ENCODE measurements at regions of chr12 and their contacts with region 1.

Region 1: DNA sequence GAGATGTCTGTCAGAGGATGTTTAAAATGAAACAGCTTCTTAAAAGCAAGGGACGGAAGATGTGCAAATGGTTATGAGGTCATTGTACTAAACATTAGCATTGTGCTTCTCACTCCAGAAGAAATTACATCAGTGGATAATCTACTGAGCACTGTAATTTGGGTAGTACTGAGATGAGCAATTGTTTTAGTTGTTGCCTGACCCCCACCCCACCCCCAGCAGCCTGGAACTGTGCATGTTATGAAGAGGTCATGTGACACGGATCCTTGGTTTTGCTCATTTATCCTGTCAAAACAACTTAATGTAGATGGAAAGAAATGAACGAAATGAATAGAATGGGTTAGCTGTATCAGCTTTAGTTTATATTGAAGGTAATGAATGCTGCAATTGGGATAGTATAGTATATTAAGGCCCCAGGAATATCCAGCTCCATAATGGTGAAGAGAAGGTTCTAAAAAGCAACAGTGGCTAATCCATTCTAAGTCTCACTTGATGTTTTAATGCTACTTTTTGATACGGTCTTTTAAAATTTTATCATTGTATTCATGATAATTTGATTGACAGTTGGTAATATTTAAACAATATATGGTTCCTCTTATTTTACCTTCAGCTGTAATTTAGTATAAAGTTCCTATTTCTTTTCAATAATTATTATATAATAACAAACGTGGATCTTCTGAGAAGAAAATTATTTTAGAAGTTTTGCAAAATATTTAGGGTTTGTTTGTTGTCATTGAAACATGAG is 58.5 kb downstream of the WNK1 start:
- DNase-seq: no peak
- H3K4me3 ChIP-seq: no peak overlapping the region
- H3K27ac ChIP-seq: no peak overlapping the region
- H3K4me1 ChIP-seq: no peaks in the 10 kb centered on the region
- H3K27me3 ChIP-seq: no peaks in the 10 kb centered on the region
- CTCF ChIP-seq: no peak

Region 2: DNA sequence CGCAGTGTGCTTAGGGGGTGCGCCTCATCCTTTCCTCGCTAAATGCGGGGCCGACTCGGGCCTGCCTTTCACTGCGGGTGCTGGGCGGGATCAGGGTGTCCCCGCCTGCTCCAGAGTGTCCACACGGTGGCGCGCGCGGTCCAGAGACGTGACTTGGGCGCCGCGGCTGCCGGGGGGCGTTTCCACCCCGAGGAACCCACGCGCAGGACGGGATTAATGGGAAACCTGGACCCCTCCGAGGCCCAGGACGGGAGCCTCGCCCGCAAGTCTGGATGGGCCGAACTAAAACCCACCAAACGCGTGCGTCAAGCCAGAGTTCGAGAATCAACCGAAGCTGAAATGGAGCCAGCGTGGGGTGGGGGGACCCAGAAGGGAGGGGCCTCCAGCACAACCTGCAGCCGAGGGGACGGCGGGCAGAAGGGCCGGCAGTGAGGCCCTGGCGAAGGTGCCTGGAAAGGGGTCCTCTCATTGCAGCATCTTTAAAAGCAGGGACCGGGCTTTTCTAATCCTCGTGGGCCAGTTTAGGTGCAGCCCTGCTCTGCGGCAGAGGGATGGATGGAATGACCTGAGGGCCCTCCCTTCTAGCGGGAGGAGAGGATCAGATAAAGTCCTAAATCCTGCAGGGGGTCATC is 240.9 kb before region 1 on chr12:
- CTCF ChIA-PET with region 1: interaction called, 14 read pairs
- POLR2A ChIA-PET with region 1: no interaction called
- intact Hi-C with region 1: loop called (anchors 1 kb)
- DNase-seq: peak; percentile 61 to 90
- H3K4me3 ChIP-seq: peak overlapping the region; percentile 77
- H3K27ac ChIP-seq: peak overlapping the region; percentile 84; the same call in 1 of the 2 replicates
- H3K4me1 ChIP-seq: peaks cover 25% of the 10 kb centered on the region
- H3K27me3 ChIP-seq: no peaks in the 10 kb centered on the region
- CTCF ChIP-seq: peak; percentile 94

Region 3: GRCh38 chr12:575948-576612 is 234.8 kb before region 1 on chr12:
- CTCF ChIA-PET with region 1: interaction called, 14 read pairs
- POLR2A ChIA-PET with region 1: no interaction called
- intact Hi-C with region 1: loop called (anchors 1 kb)
- DNase-seq: peak; percentile 48 to 84
- H3K4me3 ChIP-seq: peak overlapping the region; percentile 33; the same call in 1 of the 2 replicates
- H3K27ac ChIP-seq: no peak overlapping the region
- H3K4me1 ChIP-seq: peaks cover 22% of the 10 kb centered on the region
- H3K27me3 ChIP-seq: no peaks in the 10 kb centered on the region
- CTCF ChIP-seq: peak; percentile 99

Region 4: DNA sequence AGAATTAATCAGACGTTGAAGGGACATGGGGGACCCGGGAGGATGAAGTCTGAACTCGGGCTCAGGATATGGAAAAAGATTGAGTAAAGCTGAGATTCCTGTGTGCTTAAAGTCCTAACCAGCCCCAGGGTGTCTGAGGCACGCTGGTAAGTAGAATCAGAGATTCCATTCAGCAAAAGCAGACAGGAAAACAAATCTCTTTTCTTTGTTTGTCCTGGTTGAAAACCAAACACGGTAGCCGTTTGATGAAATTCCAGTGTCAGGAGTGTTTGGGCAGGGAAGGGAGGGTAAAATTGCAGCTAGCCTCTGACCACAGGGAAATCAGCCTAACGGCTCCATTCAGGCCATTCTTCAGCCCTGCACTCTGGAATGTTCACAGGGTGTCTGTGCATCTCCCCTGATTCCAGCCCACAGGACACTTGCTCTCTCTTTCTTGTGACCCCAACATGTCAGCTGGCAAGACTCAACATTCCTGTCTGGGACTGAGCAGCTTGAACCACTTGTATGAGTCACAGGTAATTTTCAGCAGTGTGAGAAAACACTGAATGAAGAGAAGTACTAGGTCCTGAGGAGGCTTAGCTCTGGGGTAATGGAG is 178.6 kb before region 1 on chr12:
- CTCF ChIA-PET with region 1: no interaction called
- POLR2A ChIA-PET with region 1: no interaction called
- intact Hi-C with region 1: loop called (anchors 2 kb)
- DNase-seq: peak; percentile 77 to 95
- H3K4me3 ChIP-seq: peak overlapping the region; percentile 10; the same call in 1 of the 2 replicates
- H3K27ac ChIP-seq: peak overlapping the region; percentile 68
- H3K4me1 ChIP-seq: peaks cover 57% of the 10 kb centered on the region
- H3K27me3 ChIP-seq: no peaks in the 10 kb centered on the region
- CTCF ChIP-seq: no peak

Region 5: DNA sequence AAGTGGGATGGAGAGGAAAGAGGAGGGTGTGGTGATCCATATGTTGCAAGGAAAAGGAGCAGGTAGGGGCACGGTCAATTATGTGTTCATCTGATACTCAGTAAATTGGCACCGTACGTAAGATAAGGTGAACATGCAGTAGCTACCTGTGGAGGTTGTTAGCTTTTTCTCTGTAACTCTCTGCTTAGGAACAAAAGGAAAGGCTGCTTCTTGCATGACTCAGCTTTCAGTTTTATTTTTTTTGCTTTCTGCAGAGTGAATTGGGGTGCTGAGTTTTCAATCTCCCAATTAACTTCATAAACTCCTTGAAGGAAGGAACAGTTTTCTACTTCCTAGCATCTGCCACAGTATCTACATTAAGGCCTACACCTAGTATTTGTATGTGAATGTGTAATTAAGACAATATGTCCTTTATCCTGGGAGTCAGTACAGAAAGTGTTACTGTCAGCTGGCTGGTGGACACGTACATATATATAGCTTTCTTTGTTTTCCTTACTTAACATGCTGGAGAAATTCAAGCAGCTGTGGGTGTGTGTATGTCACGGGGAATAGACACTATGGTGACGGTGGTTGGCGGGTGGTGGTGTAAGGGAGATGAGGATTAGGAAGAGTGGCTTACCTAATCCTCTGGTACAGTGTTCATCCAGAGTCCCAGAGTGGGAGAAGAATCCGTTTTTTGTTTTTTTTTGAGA is 98.5 kb before region 1 on chr12:
- CTCF ChIA-PET with region 1: interaction called, 11 read pairs
- POLR2A ChIA-PET with region 1: no interaction called
- intact Hi-C with region 1: no loop called
- DNase-seq: peak; percentile 25 to 69
- H3K4me3 ChIP-seq: no peak overlapping the region
- H3K27ac ChIP-seq: peak overlapping the region; percentile 31
- H3K4me1 ChIP-seq: peaks cover 11% of the 10 kb centered on the region
- H3K27me3 ChIP-seq: no peaks in the 10 kb centered on the region
- CTCF ChIP-seq: no peak

Region 6: DNA sequence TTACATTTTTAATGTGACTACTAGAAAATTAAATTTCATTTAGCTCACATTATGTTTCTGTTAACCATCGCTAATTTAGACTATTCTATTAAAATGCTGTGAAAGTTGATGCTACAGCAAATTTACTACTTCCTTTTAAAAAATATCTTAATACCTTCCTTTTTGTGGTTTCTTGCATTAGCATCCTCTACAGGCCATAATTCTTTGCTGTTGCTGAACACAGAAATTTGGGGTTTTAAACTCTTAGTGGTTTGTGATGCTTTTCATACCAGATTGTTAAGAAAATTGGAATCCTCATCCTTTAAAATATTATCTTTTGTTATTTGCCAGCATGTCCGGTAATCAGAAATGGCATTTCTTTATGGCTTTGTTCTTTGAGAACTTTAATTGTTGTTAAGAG is 40.4 kb before region 1 on chr12:
- CTCF ChIA-PET with region 1: no interaction called
- POLR2A ChIA-PET with region 1: interaction called, 23 read pairs
- intact Hi-C with region 1: no loop called
- DNase-seq: no peak
- H3K4me3 ChIP-seq: no peak overlapping the region
- H3K27ac ChIP-seq: no peak overlapping the region
- H3K4me1 ChIP-seq: no peaks in the 10 kb centered on the region
- H3K27me3 ChIP-seq: no peaks in the 10 kb centered on the region
- CTCF ChIP-seq: no peak

Region 7: GRCh38 chr12:1583421-1584078 is 772.7 kb after region 1 on chr12:
- CTCF ChIA-PET with region 1: no interaction called
- POLR2A ChIA-PET with region 1: interaction called, 3 read pairs
- intact Hi-C with region 1: loop called (anchors 1 kb)
- DNase-seq: peak; percentile 73 to 77
- H3K4me3 ChIP-seq: peak overlapping the region; percentile 32; the same call in 1 of the 2 replicates
- H3K27ac ChIP-seq: no peak overlapping the region
- H3K4me1 ChIP-seq: peaks cover 6% of the 10 kb centered on the region
- H3K27me3 ChIP-seq: no peaks in the 10 kb centered on the region
- CTCF ChIP-seq: peak; percentile 98